HepG2 (cell line): ENCODE measurements at regions of chr9 and their contacts with region 1.

Region 1: DNA sequence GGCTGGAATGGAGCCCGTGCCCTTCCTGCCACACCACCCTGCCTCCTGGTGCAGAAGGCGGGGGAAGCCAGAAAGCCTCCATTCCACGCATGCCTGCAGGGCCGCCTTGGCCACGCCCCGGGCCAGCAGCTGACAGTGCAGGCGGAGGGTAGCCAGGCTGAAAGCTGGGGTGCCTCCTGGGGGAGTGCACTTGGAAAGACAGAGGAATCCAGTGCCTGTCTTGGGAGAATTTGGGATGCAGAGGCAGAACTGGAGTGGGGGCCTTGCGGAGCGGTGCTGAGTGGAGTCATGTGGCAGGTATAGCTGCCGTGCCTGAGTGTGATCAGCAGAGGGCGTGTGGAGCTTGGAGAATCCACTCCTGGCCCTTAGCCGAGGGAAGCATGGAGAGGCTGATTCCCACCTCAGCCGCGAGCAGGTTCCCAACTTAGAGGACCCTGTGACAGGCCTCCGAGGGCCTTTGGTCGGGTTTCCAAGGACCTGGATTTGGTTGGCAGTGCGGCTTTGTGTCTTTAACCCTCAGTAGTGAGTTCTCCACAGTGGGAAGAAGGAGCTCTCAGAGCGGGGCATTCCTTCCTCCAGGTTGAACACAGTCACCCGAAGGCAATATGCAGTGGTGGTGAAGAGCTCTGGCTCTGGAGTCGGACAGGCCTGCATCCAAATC is 9.1 kb upstream of the URM1 start:
- DNase-seq: peak; percentile 67
- ATAC-seq: peak; percentile 87
- H3K4me3 ChIP-seq: peak overlapping the region in 1 of 3 experiments; percentile 59; a peak in 3 of 6 replicates
- H3K27ac ChIP-seq: no peak overlapping the region
- H3K4me1 ChIP-seq: peaks cover 34% of the 10 kb centered on the region
- H3K27me3 ChIP-seq: peaks cover 0 to 1% of the 10 kb centered on the region in 2 experiments; a peak in 1 of 5 replicates
- CTCF ChIP-seq: peak; percentile 96
- EP300 ChIP-seq: no peak
- POLR2A ChIP-seq: no peak
- RAD21 ChIP-seq: peak; percentile 93

Region 2: GRCh38 chr9:127537792-127538191 is 824.3 kb before region 1 on chr9:
- CTCF ChIA-PET with region 1: no interaction called
- POLR2A ChIA-PET with region 1: no interaction called
- in situ Hi-C with region 1: no loop called
- intact Hi-C with region 1: no loop called
- DNase-seq: no peak
- ATAC-seq: peak; percentile 40; the same call in 2 of the 3 replicates
- H3K4me3 ChIP-seq: no peak overlapping the region
- H3K27ac ChIP-seq: no peak overlapping the region
- H3K4me1 ChIP-seq: no peaks in the 10 kb centered on the region
- H3K27me3 ChIP-seq: no peaks in the 10 kb centered on the region
- CTCF ChIP-seq: peak; percentile 38
- EP300 ChIP-seq: no peak
- POLR2A ChIP-seq: no peak
- RAD21 ChIP-seq: no peak

Region 3: GRCh38 chr9:128412120-128412790 is 50.1 kb after region 1 on chr9:
- CTCF ChIA-PET with region 1: interaction called, 24 read pairs
- POLR2A ChIA-PET with region 1: interaction called, 4 read pairs
- in situ Hi-C with region 1: loop called (anchors 5 kb)
- intact Hi-C with region 1: loop called (anchors 1 kb)
- DNase-seq: peak; percentile 58
- ATAC-seq: peak; percentile 71
- H3K4me3 ChIP-seq: peak overlapping the region in 1 of 3 experiments; percentile 26; a peak in 1 of 6 replicates
- H3K27ac ChIP-seq: no peak overlapping the region
- H3K4me1 ChIP-seq: peaks cover 44% of the 10 kb centered on the region
- H3K27me3 ChIP-seq: peaks cover 1 to 7% of the 10 kb centered on the region in 2 experiments; a peak in 3 of 5 replicates
- CTCF ChIP-seq: peak; percentile 96
- EP300 ChIP-seq: no peak
- POLR2A ChIP-seq: no peak
- RAD21 ChIP-seq: peak; percentile 87

Region 4: GRCh38 chr9:128420060-128420650 is 58.0 kb after region 1 on chr9:
- CTCF ChIA-PET with region 1: interaction called, 9 read pairs
- POLR2A ChIA-PET with region 1: no interaction called
- in situ Hi-C with region 1: no loop called
- intact Hi-C with region 1: loop called (anchors 2 kb)
- DNase-seq: peak; percentile 39
- ATAC-seq: peak; percentile 84
- H3K4me3 ChIP-seq: peak overlapping the region; percentile 85 to 92 (median 91)
- H3K27ac ChIP-seq: no peak overlapping the region
- H3K4me1 ChIP-seq: peaks cover 26% of the 10 kb centered on the region
- H3K27me3 ChIP-seq: peaks cover 4 to 8% of the 10 kb centered on the region in 2 experiments; a peak in 3 of 5 replicates
- CTCF ChIP-seq: peak; percentile 88
- EP300 ChIP-seq: no peak
- POLR2A ChIP-seq: no peak
- RAD21 ChIP-seq: peak; percentile 35; the same call in 1 of the 2 replicates